ENCODE measurements at regions of chr2 and their contacts with region 1.

Region 1: DNA sequence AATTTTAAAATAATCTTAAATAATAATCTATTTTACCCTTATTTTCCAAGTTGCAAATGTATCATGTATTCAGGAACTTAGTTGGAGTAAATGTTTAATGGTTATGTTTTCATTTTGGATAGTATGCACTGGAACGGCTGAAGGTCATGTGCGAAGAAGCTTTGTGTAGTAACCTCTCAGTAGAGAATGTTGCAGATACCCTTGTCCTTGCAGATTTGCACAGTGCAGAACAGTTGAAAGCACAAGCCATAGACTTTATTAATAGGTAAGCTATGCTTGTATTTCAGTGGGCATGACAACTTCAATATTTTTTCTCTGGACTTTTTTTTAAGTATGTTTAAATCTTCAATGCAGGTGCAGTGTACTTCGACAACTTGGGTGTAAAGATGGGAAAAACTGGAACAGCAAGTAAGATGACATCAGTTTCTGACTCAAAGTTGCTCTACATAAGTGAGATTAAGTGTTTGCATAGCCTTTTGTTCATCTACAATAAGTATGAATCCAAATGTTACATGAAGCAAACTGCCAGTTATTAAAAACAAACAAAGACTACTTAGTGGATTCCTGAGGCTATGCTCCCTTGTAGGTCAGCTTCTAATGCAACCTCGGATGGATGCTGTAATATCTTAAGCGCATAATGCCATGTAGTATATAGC is 63.1 kb downstream of the SPOPL start:
- DNase-seq: no peak
- ATAC-seq: peak; percentile 67

Region 2: GRCh38 chr2:138501425-138502283 is 63.1 kb before region 1 on chr2 and contains the start of gene SPOPL:
- intact Hi-C with region 1: loop called (anchors 10 kb)
- DNase-seq: peak; percentile 97
- ATAC-seq: peak; percentile 99
- total RNA-seq, gene SPOPL: 14.1 TPM

Measured in Right ventricle myocardium inferior (tissue), 1 donor.